ENCODE measurements at regions of chr14 and their contacts with region 1.

Region 1: GRCh38 chr14:75487155-75487671 is 35.1 kb upstream of the BATF start:
- DNase-seq: no peak
- ATAC-seq: peak; percentile 15
- H3K4me3 ChIP-seq: no peak overlapping the region
- H3K27ac ChIP-seq: no peak overlapping the region
- H3K4me1 ChIP-seq: no peaks in the 10 kb centered on the region
- H3K27me3 ChIP-seq: no peaks in the 10 kb centered on the region
- CTCF ChIP-seq: no peak

Region 2: GRCh38 chr14:75132382-75133086 is 354.7 kb before region 1 on chr14:
- intact Hi-C with region 1: loop called (anchors 10 kb)
- DNase-seq: no peak
- ATAC-seq: peak; percentile 96
- H3K4me3 ChIP-seq: no peak overlapping the region
- H3K27ac ChIP-seq: peak overlapping the region; percentile 20
- H3K4me1 ChIP-seq: peaks cover 18% of the 10 kb centered on the region
- H3K27me3 ChIP-seq: no peaks in the 10 kb centered on the region
- CTCF ChIP-seq: peak; percentile 69

Measured in upper lobe of right lung (tissue), 1 donor.